ENCODE measurements at regions of chr7 and their contacts with region 1.

Region 1: DNA sequence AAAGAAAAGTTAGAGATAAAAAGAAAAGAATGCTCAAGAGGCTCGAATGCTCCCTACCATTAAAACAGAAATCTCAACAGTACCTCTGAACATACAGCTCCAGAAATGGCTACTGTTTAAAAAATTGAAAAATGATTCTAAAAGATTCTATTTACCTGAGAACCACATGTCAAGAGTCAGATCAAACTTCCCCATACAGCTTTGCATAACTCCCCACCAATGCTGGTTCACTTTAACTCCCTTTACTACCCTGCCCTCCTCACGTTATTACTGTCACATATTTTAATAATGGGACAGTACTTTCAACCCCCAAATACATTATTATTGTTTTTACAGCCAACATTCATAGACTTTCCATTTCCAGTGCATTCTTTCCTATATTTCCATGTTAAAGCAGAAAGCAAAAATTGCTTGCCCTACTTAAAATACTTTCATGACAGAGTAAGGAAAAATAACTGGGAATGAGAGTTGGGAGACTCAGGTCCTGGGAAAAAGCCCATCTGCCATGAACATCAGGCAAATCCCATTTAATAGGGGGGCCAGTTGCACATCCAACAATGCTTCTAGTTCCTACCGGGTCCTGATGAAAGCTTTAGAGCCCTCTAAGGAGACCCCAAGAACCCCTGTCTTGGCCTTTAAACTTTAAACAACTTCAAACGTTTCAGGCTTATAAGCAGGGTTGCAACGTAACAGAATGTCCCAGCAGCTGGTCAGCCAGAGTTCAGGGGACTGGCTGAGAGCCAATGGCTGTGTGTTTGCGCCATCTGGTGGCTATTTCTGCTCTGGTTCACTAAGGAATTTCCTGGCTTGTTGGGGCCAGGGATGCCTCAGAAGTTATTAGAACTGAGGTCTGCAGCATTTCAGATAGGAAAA is 247.4 kb downstream of the ELMO1 start:
- DNase-seq: peak in 5 of 9 donors; percentile 10 to 44 (median 18)
- ATAC-seq: peak; percentile 64
- H3K4me3 ChIP-seq: no peak overlapping the region
- H3K4me3 Mint-ChIP-seq: no peak overlapping the region
- H3K27ac ChIP-seq: no peak overlapping the region
- H3K27ac Mint-ChIP-seq: peak overlapping the region in 5 of 9 donors; percentile 18 to 74 (median 28)
- H3K4me1 ChIP-seq: no peaks in the 10 kb centered on the region
- H3K4me1 Mint-ChIP-seq: peaks cover 0 to 19% (median 11%) of the 10 kb centered on the region in 7 donors
- H3K27me3 ChIP-seq: no peaks in the 10 kb centered on the region
- H3K27me3 Mint-ChIP-seq: no peaks in the 10 kb centered on the region

Region 2: GRCh38 chr7:36440880-36441279 is 760.4 kb before region 1 on chr7:
- CTCF ChIA-PET with region 1: interaction called, 12 read pairs
- POLR2A ChIA-PET with region 1: no interaction called
- intact Hi-C with region 1: loop called (anchors 1 to 2 kb)
- DNase-seq: peak in 4 of 9 donors; percentile 3 to 19 (median 10)
- ATAC-seq: no peak
- H3K4me3 ChIP-seq: no peak overlapping the region
- H3K4me3 Mint-ChIP-seq: no peak overlapping the region
- H3K27ac ChIP-seq: no peak overlapping the region
- H3K27ac Mint-ChIP-seq: no peak overlapping the region
- H3K4me1 ChIP-seq: no peaks in the 10 kb centered on the region
- H3K4me1 Mint-ChIP-seq: no peaks in the 10 kb centered on the region
- H3K27me3 ChIP-seq: no peaks in the 10 kb centered on the region
- H3K27me3 Mint-ChIP-seq: no peaks in the 10 kb centered on the region

Region 3: DNA sequence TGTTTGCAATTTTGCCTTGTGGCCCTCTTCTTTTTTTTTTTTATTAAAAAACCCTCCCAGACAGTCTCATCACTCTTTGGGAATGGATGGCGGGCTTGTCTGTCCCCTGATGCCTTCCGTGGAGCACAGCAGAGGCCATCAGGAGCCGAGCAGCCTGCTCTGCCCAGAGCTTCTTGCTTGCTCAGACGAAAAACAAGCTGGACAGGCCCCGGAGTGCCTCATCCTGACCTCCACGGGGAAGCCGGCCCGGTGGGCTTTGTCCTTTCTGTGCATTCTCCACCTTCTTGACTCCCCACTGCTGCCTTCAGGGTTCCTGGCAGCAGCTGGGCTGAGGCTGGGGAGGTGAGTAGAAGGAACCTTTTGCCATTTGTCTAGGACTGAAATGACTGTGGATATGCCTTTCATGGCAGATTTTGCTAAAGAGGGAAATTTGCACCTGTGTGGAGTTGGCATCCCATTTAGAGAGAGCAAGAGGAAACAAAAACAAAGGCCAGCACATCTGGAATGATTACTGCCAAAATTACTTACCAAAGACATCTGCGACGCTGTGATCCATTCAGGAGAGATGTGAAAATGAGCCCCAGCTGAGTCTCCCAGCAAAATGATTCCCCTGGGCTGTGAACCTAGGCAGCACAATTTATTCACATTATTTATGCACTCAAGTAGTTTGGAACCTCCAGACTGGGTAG is 585.2 kb before region 1 on chr7:
- CTCF ChIA-PET with region 1: no interaction called
- POLR2A ChIA-PET with region 1: no interaction called
- intact Hi-C with region 1: no loop called
- DNase-seq: no peak
- ATAC-seq: no peak
- H3K4me3 ChIP-seq: no peak overlapping the region
- H3K4me3 Mint-ChIP-seq: no peak overlapping the region
- H3K27ac ChIP-seq: no peak overlapping the region
- H3K27ac Mint-ChIP-seq: no peak overlapping the region
- H3K4me1 ChIP-seq: no peaks in the 10 kb centered on the region
- H3K4me1 Mint-ChIP-seq: peaks cover 10 to 20% (median 11%) of the 10 kb centered on the region in 7 donors
- H3K27me3 ChIP-seq: no peaks in the 10 kb centered on the region
- H3K27me3 Mint-ChIP-seq: no peaks in the 10 kb centered on the region

Region 4: GRCh38 chr7:36686499-36686898 is 514.7 kb before region 1 on chr7:
- CTCF ChIA-PET with region 1: interaction called, 5 read pairs
- POLR2A ChIA-PET with region 1: no interaction called
- intact Hi-C with region 1: loop called (anchors 1 to 5 kb)
- DNase-seq: no peak
- ATAC-seq: peak; percentile 60
- H3K4me3 ChIP-seq: no peak overlapping the region
- H3K4me3 Mint-ChIP-seq: peak overlapping the region in 4 of 10 donors; percentile 26 to 78 (median 36)
- H3K27ac ChIP-seq: no peak overlapping the region
- H3K27ac Mint-ChIP-seq: peak overlapping the region in 6 of 9 donors; percentile 26 to 87 (median 67)
- H3K4me1 ChIP-seq: peaks cover 7 to 32% of the 10 kb centered on the region in 2 donors
- H3K4me1 Mint-ChIP-seq: peaks cover 13 to 68% (median 64%) of the 10 kb centered on the region in 7 donors
- H3K27me3 ChIP-seq: no peaks in the 10 kb centered on the region
- H3K27me3 Mint-ChIP-seq: no peaks in the 10 kb centered on the region

Region 5: DNA sequence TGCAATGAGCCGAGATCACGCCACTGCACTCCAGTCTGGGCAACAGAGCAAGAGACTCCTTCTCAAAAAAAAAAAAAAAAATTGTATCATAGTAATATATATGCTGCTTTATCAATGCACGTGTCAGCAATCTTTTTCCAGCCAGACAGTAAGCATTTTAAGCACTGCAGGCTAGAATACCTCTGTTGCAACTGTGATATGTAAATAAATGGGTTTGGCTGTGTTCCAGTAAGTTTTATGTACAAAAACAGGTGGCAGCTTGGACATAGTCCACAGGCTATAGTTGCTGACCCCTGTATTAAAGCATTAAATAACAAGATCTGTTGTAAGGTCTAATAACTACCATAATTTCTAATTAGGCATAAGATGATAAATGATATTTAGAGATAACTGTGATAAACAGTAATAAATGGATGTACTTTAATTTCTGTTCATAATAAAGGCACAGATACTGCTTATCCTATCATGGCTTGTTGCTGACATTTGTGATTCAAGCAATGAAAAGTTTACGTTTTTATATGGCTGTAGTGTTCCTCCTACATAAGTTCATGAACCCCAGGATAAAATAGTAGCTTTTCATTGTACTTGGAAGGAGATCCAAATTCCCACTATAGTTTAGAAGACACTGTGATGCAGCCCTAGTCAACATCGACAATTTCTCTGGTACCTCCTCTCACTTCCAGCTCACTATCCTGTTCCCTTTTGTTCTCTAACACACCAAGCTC is 86.1 kb after region 1 on chr7:
- CTCF ChIA-PET with region 1: no interaction called
- POLR2A ChIA-PET with region 1: no interaction called
- intact Hi-C with region 1: no loop called
- DNase-seq: no peak
- ATAC-seq: no peak
- H3K4me3 ChIP-seq: no peak overlapping the region
- H3K4me3 Mint-ChIP-seq: peak overlapping the region in 1 of 10 donors; percentile 28
- H3K27ac ChIP-seq: no peak overlapping the region
- H3K27ac Mint-ChIP-seq: peak overlapping the region in 7 of 9 donors; percentile 50 to 79 (median 66)
- H3K4me1 ChIP-seq: peaks cover 8 to 18% of the 10 kb centered on the region in 2 donors
- H3K4me1 Mint-ChIP-seq: peaks cover 35 to 72% (median 61%) of the 10 kb centered on the region in 7 donors
- H3K27me3 ChIP-seq: no peaks in the 10 kb centered on the region
- H3K27me3 Mint-ChIP-seq: no peaks in the 10 kb centered on the region

Measured in naive thymus-derived CD4-positive, alpha-beta T cell (primary cell).